Esophagus muscularis mucosa (tissue), 4 donors: ENCODE measurements at regions of chr17 and their contacts with region 1.

Region 1: GRCh38 chr17:45218895-45219661 is 2.6 kb upstream of the FMNL1 start:
- DNase-seq: no peak
- H3K4me3 ChIP-seq: no peak overlapping the region
- H3K27ac ChIP-seq: no peak overlapping the region
- H3K4me1 ChIP-seq: peaks cover 20 to 48% (median 38%) of the 10 kb centered on the region in 4 donors
- H3K27me3 ChIP-seq: peaks cover 0 to 36% (median 3%) of the 10 kb centered on the region in 4 donors
- CTCF ChIP-seq: peak; percentile 91 to 98 (median 95)
- EP300 ChIP-seq: no peak
- POLR2A ChIP-seq: no peak

Region 2: DNA sequence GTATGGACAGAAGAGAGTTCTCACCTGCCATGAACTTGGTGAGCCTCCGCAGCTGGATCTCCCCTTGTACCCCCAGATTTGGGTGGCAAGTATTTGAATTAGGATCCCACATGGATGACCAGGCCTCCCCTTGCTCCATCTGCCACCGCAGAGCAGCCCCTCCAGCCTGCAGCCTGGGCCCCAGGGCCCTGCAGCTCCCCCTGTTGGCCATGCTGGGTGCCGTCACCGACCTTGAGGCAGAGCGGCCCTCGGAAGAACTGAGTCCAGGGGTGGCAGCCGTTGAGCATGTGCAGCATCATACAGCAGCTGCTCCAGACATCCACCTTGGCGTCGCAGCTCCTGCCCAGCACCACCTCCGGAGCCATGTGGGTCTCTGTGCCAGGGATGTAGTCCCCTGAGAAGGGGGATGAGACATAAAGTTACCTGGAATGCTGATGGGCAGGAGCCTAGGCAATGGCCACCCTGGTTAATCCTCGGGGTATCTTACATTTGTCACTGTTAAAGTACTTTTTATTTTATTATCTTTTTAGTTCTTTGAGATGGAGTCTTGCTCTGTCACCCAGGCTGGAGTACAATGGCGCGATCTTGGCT is 51.8 kb after region 1 on chr17:
- intact Hi-C with region 1: loop called (anchors 5 kb)
- DNase-seq: no peak
- H3K4me3 ChIP-seq: no peak overlapping the region
- H3K27ac ChIP-seq: no peak overlapping the region
- H3K4me1 ChIP-seq: peaks cover 0 to 18% (median 12%) of the 10 kb centered on the region in 4 donors
- H3K27me3 ChIP-seq: no peaks in the 10 kb centered on the region
- CTCF ChIP-seq: peak; percentile 35 to 50 (median 36)
- EP300 ChIP-seq: no peak
- POLR2A ChIP-seq: no peak

Region 3: DNA sequence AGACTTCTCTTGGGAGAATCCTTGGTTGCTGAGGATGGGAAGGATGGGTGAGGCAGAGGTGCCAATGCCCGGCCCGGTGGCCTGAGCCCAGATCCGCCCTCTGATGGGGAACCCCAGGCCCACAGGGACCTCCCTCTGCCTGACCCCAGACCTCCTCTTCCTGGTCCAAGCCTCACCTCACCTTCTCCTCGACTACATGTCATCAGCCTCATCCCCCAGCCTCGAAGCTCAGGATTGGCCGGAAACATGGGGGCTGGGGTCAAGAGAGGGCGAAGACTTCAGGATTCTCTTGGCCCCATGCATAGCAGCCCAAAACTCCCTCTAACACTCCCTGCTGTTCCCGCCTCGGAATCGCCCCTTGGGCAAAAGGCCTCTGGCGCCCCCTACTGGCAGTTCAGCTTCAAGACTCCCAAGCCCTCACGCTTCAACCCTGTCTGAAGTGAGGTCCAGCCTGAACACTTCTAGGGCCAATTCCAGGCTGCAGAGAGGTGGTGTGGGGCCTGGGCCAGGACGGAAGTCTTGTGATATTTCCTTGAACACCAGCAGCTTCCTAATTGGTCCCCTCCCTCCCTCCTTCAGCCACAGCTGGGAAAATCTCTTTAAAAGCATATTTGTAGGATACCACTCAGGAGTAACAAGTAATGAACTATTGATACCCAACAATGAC is 166.4 kb after region 1 on chr17:
- intact Hi-C with region 1: loop called (anchors 2 kb)
- DNase-seq: peak; percentile 97
- H3K4me3 ChIP-seq: no peak overlapping the region
- H3K27ac ChIP-seq: no peak overlapping the region
- H3K4me1 ChIP-seq: peaks cover 0 to 8% (median 7%) of the 10 kb centered on the region in 4 donors
- H3K27me3 ChIP-seq: peaks cover 0 to 25% (median 0%) of the 10 kb centered on the region in 4 donors
- CTCF ChIP-seq: peak in 2 of 3 experiments; percentile 98 to 99
- EP300 ChIP-seq: no peak
- POLR2A ChIP-seq: no peak